ENCODE measurements at regions of chr17 and their contacts with region 1.

Region 1: GRCh38 chr17:66906321-66907278 is 57.9 kb upstream of the CACNG4 start:
- DNase-seq: peak; percentile 66 to 75
- H3K4me3 ChIP-seq: no peak overlapping the region
- H3K4me3 Mint-ChIP-seq: no peak overlapping the region
- H3K27ac Mint-ChIP-seq: no peak overlapping the region
- H3K4me1 ChIP-seq: no peaks in the 10 kb centered on the region
- H3K4me1 Mint-ChIP-seq: no peaks in the 10 kb centered on the region
- H3K27me3 ChIP-seq: no peaks in the 10 kb centered on the region
- H3K27me3 Mint-ChIP-seq: no peaks in the 10 kb centered on the region
- CTCF ChIP-seq: peak; percentile 89 to 91

Region 2: GRCh38 chr17:66727639-66728570 is 178.7 kb before region 1 on chr17:
- CTCF ChIA-PET with region 1: interaction called, 7 read pairs
- POLR2A ChIA-PET with region 1: no interaction called
- intact Hi-C with region 1: loop called (anchors 1 kb)
- DNase-seq: peak; percentile 62 to 69
- H3K4me3 ChIP-seq: no peak overlapping the region
- H3K4me3 Mint-ChIP-seq: no peak overlapping the region
- H3K27ac Mint-ChIP-seq: no peak overlapping the region
- H3K4me1 ChIP-seq: no peaks in the 10 kb centered on the region
- H3K4me1 Mint-ChIP-seq: no peaks in the 10 kb centered on the region
- H3K27me3 ChIP-seq: no peaks in the 10 kb centered on the region
- H3K27me3 Mint-ChIP-seq: no peaks in the 10 kb centered on the region
- CTCF ChIP-seq: peak; percentile 60 to 90

Region 3: DNA sequence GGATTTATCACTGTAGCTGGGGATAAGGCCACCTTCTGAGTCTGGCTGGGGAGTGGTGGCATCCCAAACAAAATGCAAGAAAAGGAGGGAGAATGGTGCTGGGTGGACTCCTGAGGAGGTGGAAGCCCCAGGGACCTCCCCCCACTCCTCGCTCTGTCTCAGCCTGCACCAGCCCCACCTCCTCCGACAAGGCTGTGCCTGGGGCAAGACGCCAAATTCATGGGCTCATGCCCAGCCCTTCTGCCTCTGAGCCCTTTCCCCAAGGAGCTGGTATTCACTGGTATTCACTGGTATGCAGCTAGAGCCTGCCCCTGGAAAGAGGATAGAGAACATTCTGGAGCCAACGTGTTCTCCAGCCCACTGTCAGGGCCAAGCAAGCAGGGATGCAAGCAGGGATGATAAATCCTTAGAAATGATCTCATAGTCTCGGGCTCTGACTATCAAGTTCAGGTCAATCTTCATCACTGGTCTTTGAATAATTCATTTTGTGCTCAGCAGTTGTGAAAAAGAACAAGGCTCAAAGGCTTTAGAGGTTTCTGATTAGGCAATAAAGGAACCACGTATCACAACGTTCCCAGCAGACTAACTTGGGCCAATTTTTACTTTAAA is 14.5 kb before region 1 on chr17:
- CTCF ChIA-PET with region 1: no interaction called
- POLR2A ChIA-PET with region 1: no interaction called
- intact Hi-C with region 1: no loop called
- DNase-seq: no peak
- H3K4me3 ChIP-seq: no peak overlapping the region
- H3K4me3 Mint-ChIP-seq: no peak overlapping the region
- H3K27ac Mint-ChIP-seq: no peak overlapping the region
- H3K4me1 ChIP-seq: no peaks in the 10 kb centered on the region
- H3K4me1 Mint-ChIP-seq: no peaks in the 10 kb centered on the region
- H3K27me3 ChIP-seq: no peaks in the 10 kb centered on the region
- H3K27me3 Mint-ChIP-seq: peaks cover 7% of the 10 kb centered on the region
- CTCF ChIP-seq: no peak

Region 4: DNA sequence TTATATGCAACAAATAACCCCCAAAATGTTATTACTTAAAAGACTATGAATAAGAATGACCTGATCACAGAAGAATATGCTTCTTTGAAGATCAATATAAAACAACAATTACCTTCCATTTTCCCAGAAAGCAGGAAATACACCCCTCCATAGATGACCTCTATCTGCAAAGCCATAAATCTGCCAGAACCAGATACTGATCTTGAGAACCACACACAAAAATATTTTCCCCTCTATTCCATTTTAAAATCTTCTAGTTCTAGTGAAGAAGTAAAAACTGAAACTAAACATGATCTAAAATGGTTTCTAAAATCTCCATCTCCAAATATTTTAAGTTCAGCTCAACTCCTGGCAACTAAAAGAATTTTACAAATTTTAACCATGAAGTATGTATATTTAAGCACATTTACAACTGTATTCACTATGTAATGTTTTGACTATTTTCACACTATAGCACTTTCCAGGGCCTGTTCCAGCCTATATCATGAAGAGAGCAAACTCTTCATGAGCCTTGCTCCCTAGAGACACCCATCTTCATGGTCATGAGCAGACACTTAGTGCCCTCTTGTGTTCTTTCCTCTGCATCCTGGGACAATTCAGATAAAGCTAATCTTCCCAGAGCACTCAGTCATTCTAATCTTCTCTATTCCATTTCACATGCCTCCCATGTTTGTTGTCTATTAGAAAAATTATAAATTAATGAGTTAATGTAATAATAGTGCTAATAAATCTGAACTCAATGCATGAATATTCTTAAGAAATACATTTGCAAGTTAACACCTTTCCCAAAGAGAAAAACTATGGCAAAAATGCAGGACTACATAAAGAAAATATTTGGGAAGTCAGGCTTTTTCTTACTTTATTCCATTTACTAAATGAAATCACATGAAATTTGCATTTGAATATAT is 251.4 kb after region 1 on chr17:
- CTCF ChIA-PET with region 1: no interaction called
- POLR2A ChIA-PET with region 1: no interaction called
- intact Hi-C with region 1: loop called (anchors 1 kb)
- DNase-seq: peak in 1 of 2 experiments; percentile 36
- H3K4me3 ChIP-seq: no peak overlapping the region
- H3K4me3 Mint-ChIP-seq: no peak overlapping the region
- H3K27ac Mint-ChIP-seq: no peak overlapping the region
- H3K4me1 ChIP-seq: 0 out of 2 replicates have a peak, but pooled peaks cover 4% of the 10 kb centered on the region
- H3K4me1 Mint-ChIP-seq: no peaks in the 10 kb centered on the region
- H3K27me3 ChIP-seq: no peaks in the 10 kb centered on the region
- H3K27me3 Mint-ChIP-seq: no peaks in the 10 kb centered on the region
- CTCF ChIP-seq: peak in 1 of 2 experiments; percentile 39